Endothelial cell of umbilical vein (primary cell): ENCODE measurements at regions of chr20 and their contacts with region 1.

Region 1: DNA sequence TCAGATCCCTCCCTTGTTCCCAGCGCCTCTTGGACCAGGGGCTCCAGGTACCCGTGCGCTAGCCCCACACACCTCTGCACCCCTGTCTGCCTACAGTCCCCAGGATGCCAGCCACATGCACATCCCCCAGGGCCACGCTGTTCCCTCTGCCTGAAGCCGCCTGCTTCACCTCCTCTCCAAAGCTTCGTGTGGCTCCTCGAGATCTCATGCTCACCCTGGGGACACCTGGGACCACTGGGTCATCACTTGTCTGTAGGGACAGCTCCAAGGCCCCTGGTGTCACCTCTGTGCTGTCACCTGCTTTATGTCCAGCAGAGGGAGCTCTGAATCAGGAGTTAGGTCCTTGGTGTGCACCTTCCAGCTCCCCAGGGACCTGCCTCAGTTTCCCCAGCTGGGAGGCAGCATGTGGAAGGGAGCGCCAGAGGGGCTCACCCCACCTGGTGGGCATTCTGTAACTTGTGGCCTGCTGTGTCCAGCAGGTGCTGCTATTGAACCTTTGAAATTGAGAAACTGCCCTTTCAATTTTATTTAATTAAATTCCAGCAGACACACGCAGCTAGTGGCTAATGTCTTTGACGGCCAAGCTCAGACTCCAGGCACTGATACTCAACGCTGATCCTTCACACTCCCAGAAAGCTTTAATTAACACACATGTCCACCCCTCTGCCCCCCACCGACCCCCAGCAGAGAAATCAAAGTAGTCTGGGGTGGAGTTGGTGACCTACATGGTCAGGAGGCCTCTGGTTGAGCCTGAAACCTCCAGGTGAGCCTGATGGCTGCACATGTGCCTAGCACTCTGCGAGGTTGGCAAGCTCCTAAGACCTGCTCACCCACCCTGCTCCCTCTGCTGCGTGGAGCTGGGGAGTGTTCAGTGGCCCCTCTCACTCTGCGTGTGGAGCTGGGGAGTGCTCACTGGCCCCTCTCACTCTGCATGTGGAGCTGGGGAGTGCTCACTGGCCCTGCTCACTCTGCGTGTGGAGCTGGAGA is 7.6 kb upstream of the YTHDF1 start:
- DNase-seq: peak; percentile 35
- H3K4me3 ChIP-seq: no peak overlapping the region
- H3K27ac ChIP-seq: no peak overlapping the region
- H3K4me1 ChIP-seq: no peaks in the 10 kb centered on the region
- H3K27me3 ChIP-seq: peaks cover 0 to 1% of the 10 kb centered on the region in 2 experiments
- CTCF ChIP-seq: peak; percentile 75 to 81
- POLR2A ChIP-seq: no peak

Region 2: DNA sequence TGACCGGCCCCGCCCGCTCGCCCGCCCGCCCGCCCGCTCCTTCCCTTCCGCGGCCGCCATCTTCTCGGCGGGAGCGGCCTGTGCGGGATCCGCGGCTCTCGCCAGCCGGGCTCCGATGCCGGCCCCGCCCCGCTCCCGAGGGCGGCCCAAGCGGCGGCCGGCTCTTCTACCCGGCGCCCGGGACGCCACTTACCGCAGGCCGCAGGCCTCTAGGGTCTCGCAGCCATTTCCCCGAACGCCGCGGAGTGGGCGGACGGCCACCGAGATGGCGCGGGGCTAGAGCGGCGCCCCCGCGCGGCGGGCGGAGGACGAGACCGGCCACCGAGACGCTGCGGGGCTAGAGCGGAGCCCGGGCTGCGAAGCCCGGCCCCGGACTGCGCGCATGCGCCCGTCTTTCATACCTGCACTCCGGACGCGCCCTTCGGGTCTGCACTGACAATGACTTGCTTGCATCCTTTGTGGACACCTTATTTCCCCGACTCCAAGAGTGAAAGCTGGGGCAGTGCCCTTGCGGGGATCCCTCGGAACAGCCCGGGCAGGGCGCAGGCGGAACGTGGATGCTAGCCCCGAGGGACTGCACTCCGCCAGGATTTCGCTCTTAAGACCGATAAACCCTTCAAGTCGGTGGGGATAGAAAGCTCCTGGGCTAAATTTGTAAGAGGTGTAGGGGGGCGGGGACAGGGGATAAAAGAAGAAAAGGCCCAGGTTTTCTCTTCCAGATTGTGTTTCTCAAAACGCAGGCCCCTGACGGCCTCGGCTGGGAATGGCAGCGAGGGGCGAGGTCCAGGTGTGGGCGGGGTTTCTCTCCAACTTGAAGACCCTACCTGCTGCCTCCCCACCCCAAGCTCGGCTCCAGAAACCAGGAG is 297.0 kb before region 1 on chr20 and contains the start of gene DIDO1:
- CTCF ChIA-PET with region 1: no interaction called
- POLR2A ChIA-PET with region 1: no interaction called
- dilution Hi-C with region 1: no loop called
- intact Hi-C with region 1: no loop called
- DNase-seq: peak; percentile 82
- H3K4me3 ChIP-seq: peak within 1 kb of the TSS; percentile 71 to 96 (median 74)
- H3K27ac ChIP-seq: peak within 1 kb of the TSS; percentile 58
- H3K4me1 ChIP-seq: peaks cover 53% of the 10 kb centered on the region
- H3K27me3 ChIP-seq: no peaks in the 10 kb centered on the region
- CTCF ChIP-seq: peak; percentile 48 to 73
- POLR2A ChIP-seq: no peak
- total RNA-seq, gene DIDO1: 46.6 and 51.2 TPM in 2 replicates

Region 3: GRCh38 chr20:63206904-63207303 is 16.6 kb before region 1 on chr20:
- CTCF ChIA-PET with region 1: interaction called, 19 read pairs
- POLR2A ChIA-PET with region 1: no interaction called
- dilution Hi-C with region 1: no loop called
- intact Hi-C with region 1: no loop called
- DNase-seq: no peak
- H3K4me3 ChIP-seq: no peak overlapping the region
- H3K27ac ChIP-seq: no peak overlapping the region
- H3K4me1 ChIP-seq: no peaks in the 10 kb centered on the region
- H3K27me3 ChIP-seq: no peaks in the 10 kb centered on the region
- CTCF ChIP-seq: no peak
- POLR2A ChIP-seq: no peak

Region 4: DNA sequence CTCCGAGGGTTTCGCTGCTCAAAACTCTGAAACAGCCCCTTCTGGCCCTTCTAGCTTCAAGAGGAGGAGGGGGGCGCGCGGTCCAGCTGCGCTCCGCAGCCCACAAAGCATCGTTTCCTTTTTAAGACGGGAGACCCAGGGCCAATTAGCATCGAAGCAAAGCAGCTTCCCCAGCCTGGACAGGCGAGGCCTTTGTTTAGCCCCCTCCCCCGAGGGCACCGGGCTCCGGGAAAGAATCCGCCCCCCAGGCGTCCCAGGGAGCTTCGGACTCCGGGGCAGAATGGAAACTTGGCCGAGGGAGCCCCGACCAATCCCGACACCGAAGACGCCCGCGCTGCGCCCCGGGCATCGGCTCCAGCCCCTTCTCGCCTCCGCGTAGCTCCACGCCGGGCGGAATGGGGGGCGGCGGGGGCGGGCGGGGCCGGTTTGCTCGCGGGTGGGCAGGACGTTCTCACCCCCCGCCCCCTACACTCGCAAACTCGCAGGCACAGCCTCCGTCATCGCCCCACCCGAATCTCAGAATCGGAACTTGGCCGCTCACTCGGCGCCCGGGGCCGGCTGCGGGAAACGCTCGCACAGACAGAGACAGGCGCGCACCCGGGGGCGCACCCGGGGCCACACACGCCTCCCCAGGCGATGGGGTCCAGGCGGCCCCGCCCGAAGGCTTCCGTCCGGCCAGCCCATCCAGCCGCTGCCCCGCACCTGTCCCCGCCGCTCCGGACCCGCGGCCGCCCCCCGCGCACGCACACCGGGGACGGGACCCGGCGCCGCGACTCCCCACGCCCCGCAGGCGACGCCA is 30.1 kb after region 1 on chr20:
- CTCF ChIA-PET with region 1: interaction called, 36 read pairs
- POLR2A ChIA-PET with region 1: no interaction called
- dilution Hi-C with region 1: no loop called
- intact Hi-C with region 1: no loop called
- DNase-seq: no peak
- H3K4me3 ChIP-seq: no peak overlapping the region
- H3K27ac ChIP-seq: no peak overlapping the region
- H3K4me1 ChIP-seq: no peaks in the 10 kb centered on the region
- H3K27me3 ChIP-seq: peaks cover 35 to 37% of the 10 kb centered on the region in 2 experiments
- CTCF ChIP-seq: no peak
- POLR2A ChIP-seq: no peak

Region 5: DNA sequence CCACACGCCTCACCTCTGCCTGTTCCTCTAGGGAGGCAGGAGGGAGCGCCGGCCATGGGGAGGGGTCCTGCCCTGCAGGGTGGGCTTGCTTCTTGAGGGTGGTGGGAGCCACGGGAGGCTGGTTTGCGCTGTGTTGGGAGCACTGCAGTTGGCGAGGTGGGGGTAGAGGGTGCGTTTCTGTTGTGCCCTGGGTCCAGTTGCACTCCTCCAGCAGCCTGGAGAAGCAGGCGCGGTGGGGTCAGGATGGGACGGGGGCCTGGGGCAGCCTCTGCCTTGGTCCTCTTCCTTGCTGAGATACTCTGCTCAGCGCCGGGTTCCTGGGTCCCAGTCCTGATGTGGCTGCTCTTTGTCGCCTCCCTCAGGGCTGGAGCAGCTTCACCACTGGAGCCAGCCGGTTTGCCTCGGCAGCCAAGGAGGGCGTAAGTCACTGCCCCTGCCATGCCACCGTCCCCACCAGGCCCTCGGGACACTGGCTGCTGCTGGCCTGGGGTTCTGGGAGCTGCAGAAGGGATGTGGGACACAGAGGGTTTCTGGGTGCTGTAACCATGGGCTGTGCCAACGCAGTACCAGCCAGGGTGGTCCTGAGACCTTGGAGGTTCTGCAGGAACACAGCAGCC is 57.5 kb after region 1 on chr20:
- CTCF ChIA-PET with region 1: interaction called, 22 read pairs
- POLR2A ChIA-PET with region 1: no interaction called
- dilution Hi-C with region 1: no loop called
- intact Hi-C with region 1: no loop called
- DNase-seq: no peak
- H3K4me3 ChIP-seq: no peak overlapping the region
- H3K27ac ChIP-seq: no peak overlapping the region
- H3K4me1 ChIP-seq: no peaks in the 10 kb centered on the region
- H3K27me3 ChIP-seq: no peaks in the 10 kb centered on the region
- CTCF ChIP-seq: peak in 1 of 2 donors; percentile 32
- POLR2A ChIP-seq: no peak

Region 6: DNA sequence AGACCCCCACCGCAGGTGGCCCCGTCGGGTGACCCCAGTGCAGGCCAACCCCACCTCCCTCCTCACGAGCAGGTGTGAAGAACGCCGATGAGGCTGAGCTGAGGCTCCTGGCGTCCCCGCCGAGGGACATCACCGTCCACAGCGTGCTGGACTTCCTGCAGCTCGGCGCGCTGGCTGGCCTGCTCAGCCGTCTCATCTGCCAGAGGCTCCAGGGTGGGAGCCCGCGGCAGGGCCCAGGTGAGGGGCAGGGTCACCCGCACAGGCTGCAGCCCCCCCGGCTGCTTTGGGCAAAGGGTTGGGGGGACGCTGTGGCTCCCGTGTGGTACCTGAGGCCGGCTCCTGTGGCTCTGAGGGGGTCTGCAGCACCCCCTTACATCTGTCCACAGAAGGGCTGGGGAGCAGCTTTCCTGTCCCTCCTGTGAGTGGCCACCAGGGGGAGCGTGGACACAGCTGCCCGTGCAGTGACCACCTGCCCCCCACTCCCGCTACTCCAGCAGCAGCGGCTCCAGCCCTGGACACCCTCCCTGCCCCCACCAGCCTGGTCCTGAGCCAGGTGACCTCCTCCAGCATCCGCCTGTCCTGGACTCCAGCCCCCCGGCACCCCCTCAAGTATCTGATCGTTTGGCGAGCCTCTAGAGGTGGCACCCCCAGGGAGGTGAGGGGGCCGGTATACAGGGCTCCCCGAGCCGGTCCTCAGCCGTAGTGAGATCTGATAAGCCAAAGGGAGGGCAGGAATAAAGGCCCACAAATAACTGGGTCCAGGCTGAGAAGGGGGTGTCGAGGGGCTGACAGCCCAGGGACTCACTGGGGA is 86.0 kb after region 1 on chr20:
- CTCF ChIA-PET with region 1: interaction called, 17 read pairs
- POLR2A ChIA-PET with region 1: no interaction called
- dilution Hi-C with region 1: no loop called
- intact Hi-C with region 1: no loop called
- DNase-seq: peak; percentile 19
- H3K4me3 ChIP-seq: no peak overlapping the region
- H3K27ac ChIP-seq: no peak overlapping the region
- H3K4me1 ChIP-seq: no peaks in the 10 kb centered on the region
- H3K27me3 ChIP-seq: no peaks in the 10 kb centered on the region
- CTCF ChIP-seq: peak; percentile 69 to 93
- POLR2A ChIP-seq: no peak